Posterior vena cava (tissue), 2 donors: ENCODE measurements at regions of chr11 and their contacts with region 1.

Region 1: GRCh38 chr11:45043755-45044475 is 93.2 kb upstream of the TP53I11 start:
- DNase-seq: no peak

Region 2: GRCh38 chr11:45000918-45001317 is 43.0 kb before region 1 on chr11:
- intact Hi-C with region 1: loop called in 1 of 2 experiments (anchors 1 kb)
- DNase-seq: no peak